ENCODE measurements at regions of chr1 and their contacts with region 1.

Region 1: DNA sequence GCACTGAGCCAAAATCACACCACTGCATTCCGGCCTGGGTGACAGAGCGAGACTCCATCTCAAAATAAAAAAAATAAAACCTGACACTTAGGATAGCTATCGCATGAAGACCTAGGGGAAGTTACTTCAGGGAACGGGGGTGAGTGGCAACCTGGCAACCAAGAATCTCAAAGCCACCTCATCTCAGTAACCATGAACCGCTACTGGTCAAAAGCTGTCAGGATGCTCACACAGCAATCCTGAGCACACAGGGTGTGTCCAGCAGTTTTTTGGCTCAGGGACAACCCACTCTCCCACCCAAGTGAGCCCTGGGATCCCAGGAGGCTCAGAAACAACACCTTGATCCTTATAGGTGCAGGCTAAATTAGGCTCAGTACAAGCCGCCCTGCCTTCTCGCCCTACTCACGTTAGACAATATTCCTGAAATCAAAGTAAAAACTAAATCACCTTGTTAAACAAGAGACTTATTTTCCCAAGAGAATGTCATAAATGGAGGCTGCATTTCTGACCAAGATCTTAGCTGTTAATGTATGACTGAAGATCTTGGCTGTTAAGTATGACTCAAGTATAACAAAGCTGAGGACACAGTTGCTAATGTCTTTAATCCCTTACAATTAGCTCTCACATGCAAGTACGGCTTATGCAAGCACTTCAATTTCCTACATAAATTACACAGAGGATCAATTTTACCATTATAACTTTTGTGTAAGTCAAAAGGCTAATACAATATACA is 48.3 kb upstream of the NADK start:
- DNase-seq: no peak
- H3K4me3 Mint-ChIP-seq: no peak overlapping the region
- H3K27ac Mint-ChIP-seq: peak overlapping the region; percentile 56
- H3K4me1 Mint-ChIP-seq: peaks cover 27% of the 10 kb centered on the region
- H3K27me3 Mint-ChIP-seq: no peaks in the 10 kb centered on the region

Region 2: DNA sequence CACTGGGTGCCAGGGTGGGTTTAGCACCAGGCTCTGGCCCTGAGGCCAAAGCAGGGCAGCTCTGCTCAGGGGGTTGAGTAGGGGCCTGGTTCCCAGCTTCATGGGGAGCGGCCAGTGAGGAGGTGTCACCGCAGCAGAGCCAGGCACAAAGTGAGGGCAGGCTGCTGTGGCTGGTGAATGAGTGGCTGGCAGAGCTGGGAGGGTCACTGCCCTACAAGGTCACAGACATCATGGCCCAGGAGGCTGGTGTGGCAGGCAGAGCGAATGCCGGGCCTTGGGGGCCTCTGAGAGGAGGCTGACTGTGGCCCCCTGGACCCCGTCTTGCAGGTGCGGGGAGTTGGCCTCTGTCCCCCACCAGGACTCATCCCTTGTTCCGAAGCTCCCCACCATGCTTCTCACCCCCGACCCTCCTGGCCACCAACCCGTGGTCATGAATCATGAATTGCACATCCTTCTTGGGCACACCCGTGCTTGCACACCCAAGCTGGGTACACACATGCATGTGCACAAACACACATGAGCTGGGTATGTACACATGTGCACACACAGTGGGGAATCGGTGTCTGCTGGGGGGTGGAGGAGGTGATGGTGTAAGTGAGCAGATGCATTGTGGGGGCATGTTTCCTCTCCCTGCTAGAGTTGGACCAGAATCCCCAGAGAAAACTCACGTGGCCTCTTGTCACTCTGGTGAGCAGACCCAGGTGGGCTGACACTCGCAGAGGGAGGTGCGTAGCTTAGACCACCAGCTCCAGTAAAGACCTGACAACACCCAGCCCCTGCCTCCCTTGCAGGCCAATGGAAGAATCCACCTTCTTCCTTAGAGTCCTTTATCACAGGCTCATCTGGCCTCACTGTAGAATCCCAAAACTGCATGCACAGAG is 69.2 kb after region 1 on chr1:
- intact Hi-C with region 1: no loop called
- DNase-seq: no peak
- H3K4me3 Mint-ChIP-seq: no peak overlapping the region
- H3K27ac Mint-ChIP-seq: no peak overlapping the region
- H3K4me1 Mint-ChIP-seq: peaks cover 21% of the 10 kb centered on the region
- H3K27me3 Mint-ChIP-seq: peaks cover 9% of the 10 kb centered on the region

Region 3: GRCh38 chr1:1906185-1907097 is 79.9 kb after region 1 on chr1:
- intact Hi-C with region 1: loop called (anchors 5 kb)
- DNase-seq: peak; percentile 61
- H3K4me3 Mint-ChIP-seq: peak overlapping the region; percentile 68
- H3K27ac Mint-ChIP-seq: peak overlapping the region; percentile 76
- H3K4me1 Mint-ChIP-seq: peaks cover 16% of the 10 kb centered on the region
- H3K27me3 Mint-ChIP-seq: peaks cover 2% of the 10 kb centered on the region